ENCODE measurements at regions of chr14 and their contacts with region 1.

Region 1: GRCh38 chr14:25400607-25401206 is 350.8 kb upstream of the STXBP6 start:
- H3K4me3 ChIP-seq: no peak overlapping the region
- H3K27ac ChIP-seq: no peak overlapping the region
- H3K4me1 ChIP-seq: no peaks in the 10 kb centered on the region
- CTCF ChIP-seq: no peak

Region 2: DNA sequence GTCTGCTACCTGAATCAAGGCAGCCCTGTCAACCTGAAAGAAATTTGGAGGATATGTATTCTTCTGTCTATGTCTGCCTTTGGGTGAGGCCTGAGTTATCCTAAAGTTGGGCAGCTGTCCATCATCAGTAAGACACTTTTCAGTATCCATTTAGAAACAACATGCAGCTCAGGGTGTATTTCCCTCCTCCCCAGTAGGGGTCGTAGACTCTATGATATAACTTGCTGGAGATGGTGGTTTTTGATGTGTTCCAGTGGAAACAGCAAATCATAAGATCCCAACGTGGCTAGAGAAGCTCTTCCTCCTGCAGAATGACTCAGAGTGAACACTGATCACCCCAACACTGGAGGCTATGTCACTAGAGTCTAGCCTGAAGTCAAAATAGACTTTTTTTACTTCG is 19.2 kb before region 1 on chr14:
- CTCF ChIA-PET with region 1: interaction called, 17 read pairs
- POLR2A ChIA-PET with region 1: no interaction called
- H3K4me3 ChIP-seq: no peak overlapping the region
- H3K27ac ChIP-seq: no peak overlapping the region
- H3K4me1 ChIP-seq: no peaks in the 10 kb centered on the region
- CTCF ChIP-seq: no peak

Region 3: DNA sequence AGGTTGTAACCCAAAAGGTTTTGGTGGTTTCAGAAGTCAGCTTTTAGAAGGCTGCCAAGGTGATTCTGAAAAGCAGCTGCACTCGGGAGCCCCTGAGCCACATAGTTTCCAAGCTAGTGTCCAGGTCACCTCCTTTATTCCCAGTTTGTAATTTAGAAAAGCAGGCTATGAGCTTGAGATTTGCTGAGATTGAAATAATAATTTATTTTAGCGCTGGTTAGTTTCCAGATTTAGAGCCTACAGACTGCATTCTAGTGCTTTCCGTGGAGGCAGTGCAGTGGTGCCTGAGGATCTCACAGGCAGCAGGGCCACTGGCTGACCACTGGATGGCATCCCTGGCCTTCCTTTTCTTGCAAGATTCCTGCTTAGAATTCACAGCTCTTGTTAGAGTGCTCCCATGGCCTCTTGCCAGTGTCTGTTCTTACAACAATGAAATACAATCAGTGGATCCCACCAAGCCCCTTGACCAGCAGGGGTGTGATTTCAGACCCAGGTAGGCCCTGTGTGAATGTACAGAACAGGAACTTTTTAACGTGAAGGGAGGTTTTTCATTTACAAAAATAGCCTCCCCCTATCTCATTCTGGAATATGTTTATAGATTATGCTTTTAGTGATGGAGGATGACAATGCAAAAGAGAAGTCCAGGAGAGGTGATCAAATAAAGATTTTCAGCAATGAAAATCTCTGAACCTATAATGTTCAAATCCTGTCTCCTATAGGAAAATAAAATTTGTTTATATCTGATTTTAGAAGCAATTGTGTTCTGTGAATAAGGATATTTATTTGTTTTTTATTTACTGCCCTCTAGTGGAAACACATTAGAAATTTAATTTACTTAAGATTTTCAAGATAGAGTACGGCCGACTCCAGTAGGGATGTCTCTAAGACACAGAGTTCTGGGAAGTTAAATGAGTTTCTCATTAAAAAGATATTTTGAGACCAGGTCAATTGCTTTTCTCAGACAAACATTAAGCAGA is 11.4 kb after region 1 on chr14:
- CTCF ChIA-PET with region 1: interaction called, 20 read pairs
- POLR2A ChIA-PET with region 1: no interaction called
- H3K4me3 ChIP-seq: no peak overlapping the region
- H3K27ac ChIP-seq: no peak overlapping the region
- H3K4me1 ChIP-seq: no peaks in the 10 kb centered on the region
- CTCF ChIP-seq: no peak

Measured in HEK293 (cell line).